Panc1 (cell line): ENCODE measurements at regions of chr16 and their contacts with region 1.

Region 1: GRCh38 chr16:1884155-1884760 is 12.3 kb upstream of the MEIOB start:
- DNase-seq: no peak
- ATAC-seq: peak; percentile 63; the same call in 1 of the 2 replicates
- H3K4me3 ChIP-seq: no peak overlapping the region
- H3K27ac ChIP-seq: no peak overlapping the region
- H3K4me1 ChIP-seq: no peaks in the 10 kb centered on the region
- H3K27me3 ChIP-seq: no peaks in the 10 kb centered on the region
- CTCF ChIP-seq: no peak

Region 2: DNA sequence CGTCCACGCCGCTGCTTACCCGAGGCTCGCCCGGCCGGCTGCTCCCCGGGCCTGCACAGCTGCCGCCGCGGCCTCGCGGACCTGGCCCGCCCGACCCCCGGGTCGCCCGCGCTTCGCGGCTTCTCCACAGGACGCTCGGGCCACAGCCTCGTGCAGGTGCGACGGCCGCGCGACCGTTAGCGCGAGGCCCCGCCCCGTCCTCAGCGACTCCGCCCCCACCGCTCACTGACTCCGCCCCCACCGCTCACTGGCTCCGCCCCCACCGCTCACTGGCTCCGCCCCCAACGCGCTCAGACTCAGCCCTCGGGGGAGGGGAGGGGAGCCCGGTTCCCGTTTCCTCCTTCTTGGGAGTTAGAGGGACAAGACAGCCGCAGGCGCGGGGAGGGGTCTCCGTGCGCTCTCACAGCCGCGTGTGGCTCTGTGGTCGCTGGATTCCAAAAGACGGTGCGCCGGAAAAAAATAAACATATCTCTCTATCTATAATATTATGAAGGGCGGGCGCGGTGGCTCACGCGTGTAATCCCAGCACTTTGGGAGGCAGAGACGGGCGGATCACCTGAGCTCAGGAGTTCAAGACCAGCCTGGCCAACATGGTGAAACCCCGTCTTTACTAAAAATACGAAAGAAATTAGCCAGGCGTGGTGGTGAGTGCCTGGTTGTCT is 12.2 kb before region 1 on chr16 and contains the start of gene MEIOB:
- CTCF ChIA-PET with region 1: no interaction called
- POLR2A ChIA-PET with region 1: interaction called, 12 read pairs
- in situ Hi-C with region 1: no loop called
- intact Hi-C with region 1: no loop called
- DNase-seq: no peak
- ATAC-seq: no peak
- H3K4me3 ChIP-seq: no peak within 1 kb of the TSS; a peak in 2 of 4 replicates
- H3K27ac ChIP-seq: peak within 1 kb of the TSS; percentile 81
- H3K4me1 ChIP-seq: peaks cover 20% of the 10 kb centered on the region
- H3K27me3 ChIP-seq: no peaks in the 10 kb centered on the region
- CTCF ChIP-seq: no peak
- total RNA-seq, gene MEIOB: not detected

Region 3: DNA sequence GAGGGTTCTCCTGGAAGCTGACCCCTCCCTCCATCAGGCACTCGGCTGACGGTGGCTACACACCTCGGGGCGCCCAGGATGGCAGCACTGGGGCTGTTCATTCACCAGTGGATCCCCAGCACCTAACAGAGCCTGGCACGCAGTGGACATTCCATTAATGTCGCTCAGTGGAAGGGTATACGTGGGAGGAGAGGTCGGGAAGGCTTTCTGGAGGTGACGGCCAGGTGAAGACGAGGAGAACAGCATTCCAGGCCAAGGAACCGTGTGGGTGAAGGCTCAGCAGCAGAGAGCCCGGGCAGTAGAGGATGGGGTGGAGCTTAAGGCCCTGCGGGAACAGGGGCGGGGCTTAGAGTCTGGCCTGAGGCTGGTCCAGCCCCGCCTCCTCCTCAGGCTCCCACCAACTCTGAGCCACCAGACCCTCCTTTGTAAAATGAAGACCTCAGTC is 36.5 kb after region 1 on chr16:
- CTCF ChIA-PET with region 1: no interaction called
- POLR2A ChIA-PET with region 1: interaction called, 11 read pairs
- in situ Hi-C with region 1: no loop called
- intact Hi-C with region 1: no loop called
- DNase-seq: no peak
- ATAC-seq: peak; percentile 49
- H3K4me3 ChIP-seq: peak overlapping the region in 1 of 2 experiments; percentile 17; a peak in 1 of 4 replicates
- H3K27ac ChIP-seq: no peak overlapping the region
- H3K4me1 ChIP-seq: peaks cover 26% of the 10 kb centered on the region
- H3K27me3 ChIP-seq: peaks cover 2% of the 10 kb centered on the region; the same call in 1 of the 2 replicates
- CTCF ChIP-seq: no peak

Region 4: DNA sequence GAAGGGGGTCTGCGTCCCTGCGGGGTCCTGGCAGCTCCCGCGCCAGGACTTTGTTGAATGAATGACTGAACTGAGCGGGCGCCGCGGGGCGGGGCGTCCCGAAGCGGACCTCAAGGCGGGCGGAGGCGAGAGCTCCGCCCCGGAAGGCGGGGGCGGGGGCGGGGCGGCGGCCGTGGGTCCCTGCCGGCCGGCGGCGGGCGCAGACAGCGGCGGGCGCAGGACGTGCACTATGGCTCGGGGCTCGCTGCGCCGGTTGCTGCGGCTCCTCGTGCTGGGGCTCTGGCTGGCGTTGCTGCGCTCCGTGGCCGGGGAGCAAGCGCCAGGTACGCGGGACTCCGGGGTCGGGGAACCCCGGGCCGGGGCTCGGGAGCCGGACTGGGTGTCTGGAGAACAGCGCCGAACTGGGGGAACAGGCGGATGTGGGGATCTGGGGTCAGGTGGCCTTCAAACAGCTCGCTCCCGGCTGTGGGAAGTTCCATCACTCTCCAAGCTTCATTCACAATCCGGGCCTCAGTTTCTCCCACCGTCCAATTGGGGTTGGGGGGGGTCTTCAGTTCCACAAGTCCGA is 1136.0 kb after region 1 on chr16 and contains the start of gene TNFRSF12A:
- CTCF ChIA-PET with region 1: no interaction called
- POLR2A ChIA-PET with region 1: interaction called, 10 read pairs
- in situ Hi-C with region 1: no loop called
- intact Hi-C with region 1: no loop called
- DNase-seq: no peak
- ATAC-seq: peak; percentile 15
- H3K4me3 ChIP-seq: peak within 1 kb of the TSS; percentile 94 to 95
- H3K27ac ChIP-seq: peak within 1 kb of the TSS; percentile 99
- H3K4me1 ChIP-seq: peaks cover 16% of the 10 kb centered on the region
- H3K27me3 ChIP-seq: no peaks in the 10 kb centered on the region
- CTCF ChIP-seq: no peak
- total RNA-seq, gene TNFRSF12A: 156 TPM